ENCODE measurements at regions of chrX and their contacts with region 1.

Region 1: GRCh38 chrX:150898343-150899190 is at the start of gene CD99L2:
- DNase-seq: peak; percentile 52
- ATAC-seq: peak; percentile 92
- H3K4me3 ChIP-seq: peak within 1 kb of the TSS; percentile 45 to 75 (median 69); a peak in 5 of 6 replicates
- H3K27ac ChIP-seq: no peak within 1 kb of the TSS
- H3K4me1 ChIP-seq: peaks cover 8% of the 10 kb centered on the region; the same call in 1 of the 2 replicates
- H3K27me3 ChIP-seq: peaks cover 2 to 5% of the 10 kb centered on the region in 2 experiments; a peak in 3 of 5 replicates
- CTCF ChIP-seq: 0 out of 2 replicates have a peak, but pooled peaks have one; percentile 13
- EP300 ChIP-seq: no peak
- POLR2A ChIP-seq: peak; percentile 48 to 58; a peak in 3 of 4 replicates
- RAD21 ChIP-seq: no peak
- total RNA-seq, gene CD99L2: 2.8 and 7.6 TPM in 2 replicates

Region 2: GRCh38 chrX:150848914-150849365 is 49.6 kb before region 1 on chrX:
- CTCF ChIA-PET with region 1: no interaction called
- POLR2A ChIA-PET with region 1: no interaction called
- in situ Hi-C with region 1: no loop called
- intact Hi-C with region 1: no loop called
- DNase-seq: peak; percentile 54
- ATAC-seq: peak; percentile 76
- H3K4me3 ChIP-seq: no peak overlapping the region
- H3K27ac ChIP-seq: no peak overlapping the region
- H3K4me1 ChIP-seq: peaks cover 15% of the 10 kb centered on the region
- H3K27me3 ChIP-seq: no peaks in the 10 kb centered on the region
- CTCF ChIP-seq: no peak
- EP300 ChIP-seq: 0 out of 4 replicates have a peak, but pooled peaks of 1 of the 2 experiments have one; percentile 10
- POLR2A ChIP-seq: no peak
- RAD21 ChIP-seq: no peak

Region 3: GRCh38 chrX:150982788-150983520 is 84.4 kb after region 1 on chrX and contains the start of gene HMGB3:
- CTCF ChIA-PET with region 1: no interaction called
- POLR2A ChIA-PET with region 1: no interaction called
- in situ Hi-C with region 1: no loop called
- intact Hi-C with region 1: loop called (anchors 5 kb)
- DNase-seq: peak; percentile 89
- ATAC-seq: peak; percentile 99
- H3K4me3 ChIP-seq: peak within 1 kb of the TSS; percentile 63 to 71 (median 66); a peak in 5 of 6 replicates
- H3K27ac ChIP-seq: peak within 1 kb of the TSS; percentile 75
- H3K4me1 ChIP-seq: peaks cover 16% of the 10 kb centered on the region
- H3K27me3 ChIP-seq: peaks cover 0 to 4% of the 10 kb centered on the region in 2 experiments; a peak in 1 of 5 replicates
- CTCF ChIP-seq: no peak
- EP300 ChIP-seq: no peak
- POLR2A ChIP-seq: peak; percentile 58 to 59; a peak in 3 of 4 replicates
- RAD21 ChIP-seq: no peak
- total RNA-seq, gene HMGB3: 87.1 and 119 TPM in 2 replicates